ENCODE measurements at regions of chr5 and their contacts with region 1.

Region 1: DNA sequence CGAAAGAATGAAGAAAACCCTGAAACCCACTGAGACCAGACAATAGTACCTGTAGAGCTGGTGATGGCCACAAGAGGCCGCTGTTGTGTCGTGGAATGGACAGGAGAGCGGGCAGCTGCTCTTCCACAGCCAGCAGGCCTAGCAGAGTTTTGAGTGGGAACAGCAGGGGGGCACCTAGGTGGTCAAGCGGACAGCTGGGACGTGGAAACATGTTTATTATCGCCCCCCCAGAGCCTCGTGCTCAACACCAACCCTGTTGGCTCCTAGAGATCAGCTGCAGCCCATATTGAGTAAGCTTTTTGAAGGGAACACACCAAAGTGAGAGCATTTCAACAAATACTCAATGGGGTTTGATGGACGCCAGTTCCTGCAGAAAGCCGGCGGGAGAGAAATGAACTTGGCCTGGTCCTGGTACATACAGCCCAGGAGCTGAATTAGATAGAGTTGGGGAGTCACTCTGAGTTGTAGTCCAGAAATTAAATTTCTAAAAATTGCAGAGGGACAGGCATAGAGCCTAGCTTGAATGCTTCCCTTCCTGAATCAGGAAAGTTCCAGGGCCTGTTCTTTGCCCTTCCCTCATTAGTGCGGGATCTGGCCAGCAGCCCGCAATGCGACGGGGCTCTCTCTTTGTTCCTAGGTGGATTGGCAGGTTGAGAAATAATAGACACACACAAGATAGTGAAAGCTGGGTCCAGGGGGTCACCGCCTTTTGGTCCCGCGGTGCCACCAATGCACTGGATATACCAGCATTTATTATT is 33.8 kb downstream of the MFAP3 start:
- DNase-seq: no peak
- H3K4me3 ChIP-seq: no peak overlapping the region
- CTCF ChIP-seq: peak; percentile 92

Region 2: DNA sequence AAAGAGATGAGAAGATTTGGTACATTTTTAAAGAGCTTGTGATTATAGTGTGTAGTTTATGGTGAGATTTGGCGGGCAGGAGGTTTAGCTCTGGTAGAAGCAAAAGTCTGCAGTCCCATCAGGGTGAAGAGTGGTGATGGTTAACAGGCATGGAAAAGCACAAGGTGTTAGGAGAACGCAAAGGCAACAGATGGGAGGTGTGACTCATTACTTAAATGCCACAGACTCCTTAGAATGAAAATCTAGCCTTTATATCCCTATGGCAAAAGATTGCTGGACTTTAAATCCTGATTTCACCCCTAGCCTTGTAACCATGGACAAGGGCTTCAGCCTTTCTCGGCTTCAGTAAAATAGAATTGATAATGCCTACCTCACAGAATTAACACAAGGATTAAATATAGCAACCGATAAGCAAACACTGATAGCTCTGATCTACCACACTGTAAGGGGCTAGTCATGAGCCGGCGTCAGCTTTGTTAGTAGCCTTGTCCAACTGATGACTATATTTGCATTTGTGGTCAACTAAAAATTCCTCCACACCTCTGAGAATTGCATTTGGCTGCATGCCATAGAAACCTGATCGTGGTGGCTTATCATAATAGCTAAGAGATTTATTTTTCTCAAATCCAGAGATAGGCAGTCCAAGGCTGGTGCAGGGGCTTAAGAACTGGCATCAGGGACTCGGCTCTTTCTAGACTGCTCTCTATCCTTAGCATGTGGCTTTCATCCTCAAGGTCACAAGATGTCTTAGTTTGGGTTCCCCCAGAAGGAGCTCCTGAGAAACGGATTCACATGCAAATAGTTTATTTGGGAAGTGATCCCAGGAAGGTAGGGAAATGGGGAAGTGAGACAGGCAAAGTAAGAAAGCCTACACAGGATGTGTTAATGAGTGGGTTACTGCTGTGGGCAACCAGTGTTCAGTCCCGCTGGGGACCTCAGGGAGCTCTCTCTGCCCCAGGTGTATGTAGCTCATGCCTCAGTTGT is 14.2 kb before region 1 on chr5:
- CTCF ChIA-PET with region 1: interaction called, 25 read pairs
- POLR2A ChIA-PET with region 1: no interaction called
- DNase-seq: no peak
- H3K4me3 ChIP-seq: no peak overlapping the region
- CTCF ChIP-seq: no peak

Region 3: GRCh38 chr5:154129013-154129412 is 56.4 kb after region 1 on chr5:
- CTCF ChIA-PET with region 1: no interaction called
- POLR2A ChIA-PET with region 1: no interaction called
- DNase-seq: no peak
- H3K4me3 ChIP-seq: no peak overlapping the region
- CTCF ChIP-seq: no peak

Region 4: DNA sequence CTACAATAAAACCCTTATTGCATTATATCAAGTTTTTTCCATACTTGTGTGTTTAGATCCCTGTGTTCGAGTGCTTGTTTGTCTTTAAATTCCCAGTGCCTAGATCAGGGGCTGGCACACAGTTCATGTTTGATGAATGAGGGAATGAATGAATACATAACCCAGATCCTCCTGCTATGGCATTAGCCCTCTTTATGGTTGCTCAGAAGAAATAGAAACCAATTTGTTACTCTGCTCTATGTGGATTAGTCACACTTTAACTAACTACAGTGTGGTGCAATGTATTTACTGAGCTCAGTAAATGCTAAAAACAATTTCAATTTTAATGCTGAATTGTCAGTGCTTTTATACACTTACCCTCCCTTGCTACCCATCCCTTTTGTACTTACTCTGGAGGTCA is 101.5 kb after region 1 on chr5:
- CTCF ChIA-PET with region 1: interaction called, 254 read pairs
- POLR2A ChIA-PET with region 1: interaction called, 3 read pairs
- DNase-seq: no peak
- H3K4me3 ChIP-seq: no peak overlapping the region
- CTCF ChIP-seq: no peak

Region 5: GRCh38 chr5:154236536-154237375 is 164.2 kb after region 1 on chr5:
- CTCF ChIA-PET with region 1: no interaction called
- POLR2A ChIA-PET with region 1: no interaction called
- DNase-seq: no peak
- H3K4me3 ChIP-seq: no peak overlapping the region
- CTCF ChIP-seq: no peak

Region 6: GRCh38 chr5:154405078-154405792 is 332.6 kb after region 1 on chr5:
- CTCF ChIA-PET with region 1: interaction called, 141 read pairs
- POLR2A ChIA-PET with region 1: no interaction called
- DNase-seq: no peak
- H3K4me3 ChIP-seq: peak overlapping the region; percentile 32; the same call in 1 of the 2 replicates
- CTCF ChIP-seq: peak; percentile 98

Region 7: GRCh38 chr5:154461531-154461930 is 388.9 kb after region 1 on chr5:
- CTCF ChIA-PET with region 1: interaction called, 34 read pairs
- POLR2A ChIA-PET with region 1: no interaction called
- DNase-seq: no peak
- H3K4me3 ChIP-seq: no peak overlapping the region
- CTCF ChIP-seq: peak; percentile 25

Measured in AG04449 (cell line).